ENCODE measurements at regions of chr10 and their contacts with region 1.

Region 1: DNA sequence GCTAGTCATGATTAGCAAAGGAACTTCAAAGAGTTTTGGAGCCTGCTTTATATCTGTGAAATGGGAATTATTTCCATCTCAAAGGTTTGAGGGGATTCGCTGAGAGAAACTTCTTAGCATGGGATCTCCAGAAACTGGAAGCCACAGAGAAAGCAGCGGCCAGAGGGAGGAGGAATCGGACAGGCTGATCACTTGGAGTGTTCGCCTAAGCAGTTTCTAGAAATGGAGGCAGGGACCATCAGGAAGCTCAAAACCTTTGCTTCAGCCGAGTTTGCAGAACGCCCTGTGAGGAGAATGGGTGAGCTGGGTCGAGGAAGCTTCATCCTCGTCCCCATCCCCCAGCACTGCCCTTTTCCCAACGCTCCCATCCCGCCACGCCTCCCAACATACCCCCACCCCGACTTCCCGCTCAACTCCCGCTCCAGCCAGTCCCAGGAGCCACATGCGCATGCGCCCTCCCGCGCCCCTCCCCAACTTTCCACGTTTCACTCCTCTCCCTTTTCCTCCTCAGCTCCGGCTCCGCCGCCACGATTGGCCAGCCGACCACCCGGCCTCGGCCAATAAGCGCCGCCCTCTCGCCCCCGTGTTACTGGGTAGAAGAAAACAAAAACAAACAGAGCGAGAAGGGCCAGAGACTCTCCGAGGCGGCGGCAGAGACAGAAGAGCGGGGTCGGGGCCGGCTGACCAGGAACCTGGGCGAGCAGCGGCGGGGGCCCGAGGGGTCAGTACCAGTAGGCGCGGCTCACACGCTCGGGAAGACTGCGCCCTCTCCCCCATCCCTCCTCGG is at the start of gene PDCD4:
- DNase-seq: peak; percentile 100
- H3K4me3 ChIP-seq: peak within 1 kb of the TSS; percentile 98 to 99
- H3K27ac ChIP-seq: peak within 1 kb of the TSS; percentile 100
- H3K4me1 ChIP-seq: peaks cover 0 to 48% (median 10%) of the 10 kb centered on the region in 4 donors
- H3K27me3 ChIP-seq: no peaks in the 10 kb centered on the region
- CTCF ChIP-seq: no peak

Region 2: DNA sequence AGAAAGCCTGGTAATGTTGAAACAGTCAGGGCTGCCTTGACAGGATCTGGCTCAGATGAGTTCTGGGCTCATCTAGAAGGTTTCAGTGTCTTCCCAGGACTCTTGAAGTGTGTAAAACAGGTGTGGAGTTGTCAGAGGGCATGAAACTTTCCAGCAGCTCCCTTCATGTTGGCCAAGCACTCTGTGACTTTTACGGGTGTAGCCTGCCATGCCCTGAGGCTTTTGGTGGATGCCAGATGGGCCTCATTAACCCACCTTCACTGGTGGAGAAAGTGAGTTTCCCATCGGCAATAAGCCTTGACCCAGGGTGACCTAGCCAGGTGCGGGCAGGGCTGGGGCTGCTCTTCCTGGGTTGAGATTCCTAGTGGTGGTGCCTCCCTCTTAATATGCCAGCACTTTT is 66.1 kb before region 1 on chr10:
- intact Hi-C with region 1: no loop called
- DNase-seq: no peak
- H3K4me3 ChIP-seq: no peak overlapping the region
- H3K27ac ChIP-seq: no peak overlapping the region
- H3K4me1 ChIP-seq: peaks cover 0 to 24% (median 15%) of the 10 kb centered on the region in 4 donors
- H3K27me3 ChIP-seq: no peaks in the 10 kb centered on the region
- CTCF ChIP-seq: no peak

Region 3: DNA sequence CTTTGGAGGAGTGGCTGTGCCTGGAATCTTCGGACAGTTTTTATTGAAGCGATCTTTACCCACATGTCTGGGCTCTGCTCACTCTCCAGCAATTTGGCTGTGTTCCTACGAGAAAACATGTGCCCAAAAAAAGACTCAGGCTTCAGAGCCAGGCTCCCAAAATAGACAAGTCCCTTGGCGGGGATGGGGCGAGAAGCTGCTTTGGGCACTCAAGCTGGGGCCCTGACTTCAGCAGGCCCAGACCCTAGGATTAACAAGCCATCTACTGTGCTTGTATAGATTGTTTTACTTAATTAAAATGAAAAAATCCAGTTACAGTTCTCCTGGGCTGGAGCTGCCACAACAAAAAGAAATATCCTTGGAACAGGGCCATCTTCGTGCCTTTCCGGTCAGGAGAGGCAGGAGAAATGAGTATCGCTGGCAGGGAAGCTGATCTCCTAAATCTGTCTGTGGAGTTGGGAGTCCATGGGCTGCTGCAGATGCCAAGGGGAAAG is 51.1 kb before region 1 on chr10:
- intact Hi-C with region 1: loop called (anchors 5 kb)
- DNase-seq: peak; percentile 69 to 88
- H3K4me3 ChIP-seq: peak overlapping the region in 1 of 2 donors; percentile 32
- H3K27ac ChIP-seq: peak overlapping the region; percentile 78 to 79
- H3K4me1 ChIP-seq: peaks cover 0 to 56% (median 53%) of the 10 kb centered on the region in 4 donors
- H3K27me3 ChIP-seq: no peaks in the 10 kb centered on the region
- CTCF ChIP-seq: no peak

Region 4: DNA sequence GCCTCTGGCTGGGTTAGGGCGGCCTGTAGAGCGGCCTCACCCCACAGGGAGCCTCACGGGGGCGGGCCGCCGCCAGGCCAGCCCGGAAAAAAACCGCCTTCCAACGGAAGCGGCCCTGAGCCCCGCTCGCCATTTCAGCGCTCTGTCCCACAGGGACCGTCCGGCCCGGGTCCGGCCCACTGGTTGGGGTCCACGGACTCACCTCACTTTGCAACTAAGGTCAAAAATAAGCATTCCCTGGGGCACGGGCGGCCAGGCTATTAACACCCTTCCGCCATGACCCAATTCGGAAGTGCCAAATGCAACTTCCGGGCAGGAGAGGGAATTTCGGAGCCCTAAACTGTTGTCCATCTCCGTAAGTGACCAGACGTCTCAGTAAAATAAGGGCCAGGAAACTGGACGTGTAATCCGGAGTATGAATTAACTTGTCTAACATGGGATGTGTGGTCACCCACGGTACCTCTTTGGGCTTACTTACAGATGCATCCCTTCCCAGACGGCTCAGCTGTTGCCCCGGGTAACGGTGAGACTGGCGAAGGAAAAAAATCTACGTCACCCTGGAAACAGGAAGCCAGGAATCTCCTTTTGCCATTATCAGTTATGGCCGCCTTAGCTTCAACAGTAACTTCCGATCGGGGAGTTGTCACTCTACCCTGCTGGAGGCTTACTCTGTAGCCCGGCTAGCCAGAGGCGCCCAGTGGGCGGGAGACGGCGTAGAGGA is 47.3 kb after region 1 on chr10 and contains the start of gene BBIP1:
- intact Hi-C with region 1: loop called (anchors 5 kb)
- DNase-seq: no peak
- H3K4me3 ChIP-seq: peak within 1 kb of the TSS; percentile 88 to 90
- H3K27ac ChIP-seq: peak within 1 kb of the TSS; percentile 98
- H3K4me1 ChIP-seq: peaks cover 0 to 42% (median 12%) of the 10 kb centered on the region in 4 donors
- H3K27me3 ChIP-seq: no peaks in the 10 kb centered on the region
- CTCF ChIP-seq: peak in 1 of 2 experiments; percentile 1